ENCODE measurements at regions of chr10 and their contacts with region 1.

Region 1: GRCh38 chr10:1420661-1421362 is 316.5 kb downstream of the ADARB2 start:
- DNase-seq: peak; percentile 82
- ATAC-seq: peak; percentile 98
- H3K4me3 Mint-ChIP-seq: peak overlapping the region; percentile 18
- H3K27ac Mint-ChIP-seq: no peak overlapping the region
- H3K4me1 Mint-ChIP-seq: no peaks in the 10 kb centered on the region
- H3K27me3 Mint-ChIP-seq: peaks cover 21% of the 10 kb centered on the region
- CTCF ChIP-seq: peak; percentile 69

Region 2: DNA sequence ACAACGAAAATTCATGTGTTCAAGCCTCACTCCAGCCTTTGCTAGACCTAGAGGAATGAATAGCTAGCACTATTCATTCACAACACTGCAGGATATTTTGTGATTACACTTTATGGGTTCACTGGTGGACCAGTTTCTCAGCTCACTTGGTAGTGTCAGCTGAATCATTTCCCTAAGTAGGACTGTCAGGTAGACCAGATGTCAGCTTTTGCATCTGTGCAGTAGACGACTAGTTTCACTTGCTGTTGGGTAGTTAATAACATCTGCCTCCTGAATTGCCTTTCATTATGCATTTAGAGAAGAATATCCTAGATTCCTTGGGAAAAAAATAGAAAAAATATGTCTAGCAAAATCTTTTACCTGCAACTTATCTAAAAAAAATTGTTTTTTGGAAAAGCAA is 20.1 kb after region 1 on chr10:
- CTCF ChIA-PET with region 1: interaction called, 10 read pairs
- POLR2A ChIA-PET with region 1: no interaction called
- intact Hi-C with region 1: no loop called
- DNase-seq: no peak
- ATAC-seq: no peak
- H3K4me3 Mint-ChIP-seq: no peak overlapping the region
- H3K27ac Mint-ChIP-seq: no peak overlapping the region
- H3K4me1 Mint-ChIP-seq: no peaks in the 10 kb centered on the region
- H3K27me3 Mint-ChIP-seq: no peaks in the 10 kb centered on the region
- CTCF ChIP-seq: no peak